AG04450 (cell line): ENCODE measurements at regions of chr17 and their contacts with region 1.

Region 1: GRCh38 chr17:29777663-29778062 is 152.4 kb downstream of the SSH2 start:
- DNase-seq: no peak
- H3K4me3 ChIP-seq: no peak overlapping the region
- H3K27ac ChIP-seq: no peak overlapping the region
- H3K27me3 ChIP-seq: no peaks in the 10 kb centered on the region
- CTCF ChIP-seq: no peak

Region 2: DNA sequence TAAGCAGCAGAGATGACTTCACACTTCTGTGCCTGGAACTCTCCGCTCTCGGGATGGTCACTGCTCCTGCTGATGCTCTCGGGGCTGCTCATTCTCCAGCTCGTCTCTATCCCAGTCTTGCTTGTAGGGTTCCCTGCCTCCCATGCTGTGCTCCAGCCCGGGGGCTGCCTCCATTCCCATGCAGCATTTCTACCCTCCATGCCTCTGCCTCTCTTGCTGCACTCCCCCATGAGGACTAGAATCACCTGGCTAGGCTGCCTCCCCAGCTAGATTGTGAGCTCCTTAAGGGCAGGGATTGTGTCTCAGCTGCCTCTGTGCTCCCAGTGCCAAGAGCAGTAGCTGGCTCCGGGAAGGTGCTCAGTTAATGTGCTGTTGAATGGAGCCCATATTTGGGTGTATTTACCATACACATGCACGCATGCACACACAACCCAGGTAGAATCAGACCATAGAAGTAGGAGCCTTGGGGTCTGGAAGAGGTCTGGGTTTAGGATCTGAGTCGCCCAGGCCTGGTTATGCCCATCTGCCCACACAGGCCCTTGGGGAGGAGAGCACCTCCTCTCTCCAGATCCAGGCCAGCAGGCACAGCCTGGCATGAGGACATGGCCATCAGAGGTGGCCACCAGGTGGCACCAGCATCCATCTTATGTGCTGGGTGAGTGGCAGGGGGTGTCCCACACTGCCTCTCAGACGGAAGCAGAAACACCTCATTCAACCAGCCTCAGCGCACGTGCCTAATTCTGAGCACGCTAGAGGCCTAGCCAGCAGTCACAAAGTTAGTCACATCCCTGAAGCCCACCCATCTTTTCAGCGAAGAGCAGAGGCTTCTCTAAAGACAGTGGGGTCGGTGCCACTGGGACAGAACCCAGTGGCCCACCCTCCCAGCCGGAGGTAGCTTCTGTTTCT is 197.5 kb before region 1 on chr17:
- CTCF ChIA-PET with region 1: interaction called, 14 read pairs
- POLR2A ChIA-PET with region 1: no interaction called
- DNase-seq: no peak
- H3K4me3 ChIP-seq: no peak overlapping the region
- H3K27ac ChIP-seq: no peak overlapping the region
- H3K27me3 ChIP-seq: no peaks in the 10 kb centered on the region
- CTCF ChIP-seq: peak; percentile 79

Region 3: DNA sequence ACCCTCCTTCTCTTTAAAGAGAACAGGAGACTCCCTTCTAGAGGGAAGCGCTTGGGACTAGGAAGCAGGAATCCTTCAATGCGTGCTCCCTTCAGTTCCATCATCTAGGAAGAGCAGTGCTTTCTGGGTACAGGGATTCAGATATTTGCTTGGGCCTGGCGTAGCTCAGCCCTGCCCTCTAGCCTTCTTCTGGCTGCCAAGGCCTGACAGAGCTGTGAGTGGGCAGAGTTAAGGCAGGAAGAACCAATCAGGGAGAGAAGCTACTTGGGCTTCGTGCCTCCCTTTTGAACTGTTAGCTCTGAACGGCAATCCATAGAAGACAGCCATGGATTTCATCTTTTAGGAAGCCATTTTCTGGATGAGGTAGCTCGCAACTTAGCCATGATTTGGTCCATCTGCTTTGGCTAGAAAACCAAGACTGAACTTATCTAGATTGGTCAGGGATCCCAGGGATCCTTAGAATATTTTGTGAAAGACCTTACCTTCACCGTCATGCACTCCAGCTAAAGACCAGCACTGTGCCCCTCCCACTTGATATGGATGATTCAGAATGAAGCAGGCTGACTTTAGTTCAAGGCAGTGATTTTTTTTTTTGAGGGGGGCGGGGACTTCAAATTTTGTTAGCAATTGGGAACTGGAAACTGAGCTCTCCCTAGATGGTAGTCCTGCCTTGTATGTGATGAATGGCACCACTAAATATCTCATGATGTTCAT is 152.5 kb before region 1 on chr17:
- CTCF ChIA-PET with region 1: interaction called, 11 read pairs
- POLR2A ChIA-PET with region 1: no interaction called
- DNase-seq: no peak
- H3K4me3 ChIP-seq: no peak overlapping the region
- H3K27ac ChIP-seq: no peak overlapping the region
- H3K27me3 ChIP-seq: no peaks in the 10 kb centered on the region
- CTCF ChIP-seq: no peak

Region 4: GRCh38 chr17:29645515-29646051 is 132.1 kb before region 1 on chr17:
- CTCF ChIA-PET with region 1: interaction called, 11 read pairs
- POLR2A ChIA-PET with region 1: no interaction called
- DNase-seq: peak; percentile 30
- H3K4me3 ChIP-seq: no peak overlapping the region
- H3K27ac ChIP-seq: peak overlapping the region; percentile 71
- H3K27me3 ChIP-seq: no peaks in the 10 kb centered on the region
- CTCF ChIP-seq: no peak

Region 5: GRCh38 chr17:29766796-29767327 is 10.8 kb before region 1 on chr17:
- CTCF ChIA-PET with region 1: interaction called, 11 read pairs
- POLR2A ChIA-PET with region 1: no interaction called
- DNase-seq: no peak
- H3K4me3 ChIP-seq: no peak overlapping the region
- H3K27ac ChIP-seq: no peak overlapping the region
- H3K27me3 ChIP-seq: no peaks in the 10 kb centered on the region
- CTCF ChIP-seq: no peak